ENCODE measurements at regions of chr11 and their contacts with region 1.

Region 1: GRCh38 chr11:122910775-122911174 is 28.2 kb downstream of the JHY start:
- DNase-seq: no peak
- ATAC-seq: no peak
- H3K4me3 ChIP-seq: no peak overlapping the region
- H3K27ac ChIP-seq: no peak overlapping the region
- H3K4me1 ChIP-seq: no peaks in the 10 kb centered on the region
- H3K27me3 ChIP-seq: no peaks in the 10 kb centered on the region
- CTCF ChIP-seq: peak in 8 of 9 donors; percentile 11 to 58 (median 41)

Region 2: DNA sequence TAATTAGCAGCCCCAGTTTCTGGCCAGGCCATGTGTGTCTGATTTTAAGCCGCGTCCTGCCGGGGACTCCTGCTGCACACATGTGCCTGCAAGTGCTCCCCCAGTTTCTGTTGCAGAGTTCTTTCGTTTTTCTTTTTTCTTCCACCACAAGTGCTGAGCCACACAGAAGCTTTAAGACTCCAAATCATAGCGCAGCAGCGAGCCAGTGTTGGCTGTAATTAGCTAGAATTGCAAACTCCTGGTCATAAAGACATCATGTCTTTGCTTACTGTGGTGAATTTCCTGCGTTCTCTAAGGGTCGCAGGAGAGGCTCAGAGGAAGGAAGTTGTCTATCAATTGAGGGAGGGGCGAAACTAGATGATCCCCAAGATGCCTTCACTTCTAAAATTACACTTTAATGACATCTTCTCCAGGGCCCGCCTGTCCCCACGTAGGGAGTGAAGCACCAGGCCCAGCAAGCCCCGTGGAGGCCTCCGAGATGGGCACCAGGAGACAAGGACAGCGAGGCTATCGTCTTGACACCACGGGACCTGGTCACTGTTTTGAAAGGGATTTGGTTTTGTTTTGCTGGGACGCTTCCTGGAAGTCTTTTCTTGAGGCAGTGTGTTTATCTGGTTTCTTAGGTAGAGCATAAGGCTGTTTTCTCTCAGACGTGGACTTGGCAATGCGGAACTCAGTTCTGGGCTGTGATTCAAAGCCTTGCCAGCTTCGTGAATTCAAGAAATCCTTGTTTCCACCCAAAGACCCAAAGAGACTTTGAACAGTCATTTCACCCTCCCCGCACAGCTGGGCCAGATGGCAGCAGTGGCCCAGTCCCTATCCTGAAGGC is 183.5 kb before region 1 on chr11:
- intact Hi-C with region 1: no loop called
- DNase-seq: no peak
- ATAC-seq: peak in 5 of 8 donors; percentile 20 to 58 (median 41)
- H3K4me3 ChIP-seq: peak overlapping the region in 4 of 10 donors; percentile 5 to 29 (median 12)
- H3K27ac ChIP-seq: peak overlapping the region in 7 of 10 donors; percentile 6 to 81 (median 54)
- H3K4me1 ChIP-seq: peaks cover 0 to 48% (median 11%) of the 10 kb centered on the region in 9 donors
- H3K27me3 ChIP-seq: no peaks in the 10 kb centered on the region
- CTCF ChIP-seq: no peak

Region 3: GRCh38 chr11:122869622-122870021 is 41.2 kb before region 1 on chr11:
- intact Hi-C with region 1: no loop called
- DNase-seq: no peak
- ATAC-seq: no peak
- H3K4me3 ChIP-seq: no peak overlapping the region
- H3K27ac ChIP-seq: no peak overlapping the region
- H3K4me1 ChIP-seq: no peaks in the 10 kb centered on the region
- H3K27me3 ChIP-seq: peaks cover 0 to 24% (median 11%) of the 10 kb centered on the region in 7 donors
- CTCF ChIP-seq: no peak

Region 4: GRCh38 chr11:123011510-123011909 is 100.7 kb after region 1 on chr11:
- intact Hi-C with region 1: loop called in 2 of 10 experiments (anchors 5 to 10 kb)
- DNase-seq: no peak
- ATAC-seq: no peak
- H3K4me3 ChIP-seq: no peak overlapping the region
- H3K27ac ChIP-seq: no peak overlapping the region
- H3K4me1 ChIP-seq: no peaks in the 10 kb centered on the region
- H3K27me3 ChIP-seq: peaks cover 0 to 36% (median 14%) of the 10 kb centered on the region in 7 donors
- CTCF ChIP-seq: no peak

Region 5: DNA sequence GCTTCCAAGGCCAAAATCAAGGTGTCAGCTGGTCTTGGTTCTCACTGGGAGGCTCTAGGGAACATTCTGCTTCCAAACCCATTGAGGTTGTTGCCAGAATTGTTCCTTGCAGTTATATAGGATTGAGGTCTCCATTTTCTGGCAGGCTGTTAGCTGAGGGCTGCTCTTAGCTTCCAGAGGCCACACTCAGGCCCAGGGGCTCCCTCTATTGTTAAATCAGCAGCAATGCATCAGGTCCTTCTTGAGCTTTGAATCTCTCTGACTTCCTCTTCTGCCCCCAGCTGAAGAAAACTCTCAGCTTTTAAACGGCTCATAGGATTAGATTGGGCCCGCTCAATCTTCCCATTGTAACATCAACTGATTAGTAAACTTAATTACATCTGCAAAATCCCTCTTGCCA is 110.2 kb after region 1 on chr11:
- intact Hi-C with region 1: loop called in 8 of 10 experiments (anchors 2 to 10 kb)
- DNase-seq: no peak
- ATAC-seq: peak in 2 of 8 donors; percentile 35 to 42
- H3K4me3 ChIP-seq: no peak overlapping the region
- H3K27ac ChIP-seq: no peak overlapping the region
- H3K4me1 ChIP-seq: peaks cover 0 to 8% (median 0%) of the 10 kb centered on the region in 9 donors
- H3K27me3 ChIP-seq: peaks cover 0 to 25% (median 15%) of the 10 kb centered on the region in 7 donors
- CTCF ChIP-seq: peak in 8 of 9 donors; percentile 8 to 65 (median 51)

Region 6: GRCh38 chr11:123054301-123055065 is 143.7 kb after region 1 on chr11:
- intact Hi-C with region 1: loop called in 1 of 10 experiments (anchors 10 kb)
- DNase-seq: peak in 1 of 2 donors; percentile 40
- ATAC-seq: peak; percentile 71 to 93 (median 88)
- H3K4me3 ChIP-seq: no peak overlapping the region
- H3K27ac ChIP-seq: peak overlapping the region in 1 of 10 donors; percentile 3
- H3K4me1 ChIP-seq: peaks cover 23 to 59% (median 48%) of the 10 kb centered on the region in 9 donors
- H3K27me3 ChIP-seq: no peaks in the 10 kb centered on the region
- CTCF ChIP-seq: peak; percentile 58 to 82 (median 75)

Measured in heart right ventricle (tissue), 16 donors.